ENCODE measurements at regions of chr11 and their contacts with region 1.

Region 1: DNA sequence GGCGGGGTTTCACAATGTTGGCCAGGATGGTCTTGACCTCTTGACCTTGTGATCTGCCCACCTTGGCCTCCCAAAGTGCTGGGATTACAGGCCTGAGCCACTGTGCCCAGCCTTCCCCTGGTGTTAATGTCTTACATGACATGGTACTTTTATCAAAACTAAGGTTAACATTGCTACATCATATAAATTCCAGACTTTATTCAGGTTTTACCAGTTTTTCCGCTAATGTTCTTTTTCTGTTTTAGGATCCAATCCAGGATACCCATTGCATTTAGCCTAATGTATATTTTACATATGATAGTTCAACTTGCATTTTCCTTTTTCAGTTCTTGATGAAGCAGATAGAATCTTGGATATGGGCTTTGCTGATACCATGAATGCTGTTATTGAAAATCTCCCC is 14.2 kb downstream of the DDX10 start:
- DNase-seq: no peak
- ATAC-seq: no peak
- H3K4me3 ChIP-seq: no peak overlapping the region
- H3K27ac ChIP-seq: no peak overlapping the region
- H3K4me1 ChIP-seq: no peaks in the 10 kb centered on the region
- H3K27me3 ChIP-seq: no peaks in the 10 kb centered on the region
- CTCF ChIP-seq: no peak

Region 2: GRCh38 chr11:107651672-107652071 is 1027.4 kb before region 1 on chr11:
- intact Hi-C with region 1: loop called in 1 of 10 experiments (anchors 5 kb)
- DNase-seq: no peak
- ATAC-seq: no peak
- H3K4me3 ChIP-seq: no peak overlapping the region
- H3K27ac ChIP-seq: no peak overlapping the region
- H3K4me1 ChIP-seq: peaks cover 0 to 4% (median 0%) of the 10 kb centered on the region in 9 donors
- H3K27me3 ChIP-seq: peaks cover 0 to 11% (median 0%) of the 10 kb centered on the region in 7 donors
- CTCF ChIP-seq: no peak

Measured in heart right ventricle (tissue), 16 donors.